H1 (cell line): ENCODE measurements at regions of chr19 and their contacts with region 1.

Region 1: DNA sequence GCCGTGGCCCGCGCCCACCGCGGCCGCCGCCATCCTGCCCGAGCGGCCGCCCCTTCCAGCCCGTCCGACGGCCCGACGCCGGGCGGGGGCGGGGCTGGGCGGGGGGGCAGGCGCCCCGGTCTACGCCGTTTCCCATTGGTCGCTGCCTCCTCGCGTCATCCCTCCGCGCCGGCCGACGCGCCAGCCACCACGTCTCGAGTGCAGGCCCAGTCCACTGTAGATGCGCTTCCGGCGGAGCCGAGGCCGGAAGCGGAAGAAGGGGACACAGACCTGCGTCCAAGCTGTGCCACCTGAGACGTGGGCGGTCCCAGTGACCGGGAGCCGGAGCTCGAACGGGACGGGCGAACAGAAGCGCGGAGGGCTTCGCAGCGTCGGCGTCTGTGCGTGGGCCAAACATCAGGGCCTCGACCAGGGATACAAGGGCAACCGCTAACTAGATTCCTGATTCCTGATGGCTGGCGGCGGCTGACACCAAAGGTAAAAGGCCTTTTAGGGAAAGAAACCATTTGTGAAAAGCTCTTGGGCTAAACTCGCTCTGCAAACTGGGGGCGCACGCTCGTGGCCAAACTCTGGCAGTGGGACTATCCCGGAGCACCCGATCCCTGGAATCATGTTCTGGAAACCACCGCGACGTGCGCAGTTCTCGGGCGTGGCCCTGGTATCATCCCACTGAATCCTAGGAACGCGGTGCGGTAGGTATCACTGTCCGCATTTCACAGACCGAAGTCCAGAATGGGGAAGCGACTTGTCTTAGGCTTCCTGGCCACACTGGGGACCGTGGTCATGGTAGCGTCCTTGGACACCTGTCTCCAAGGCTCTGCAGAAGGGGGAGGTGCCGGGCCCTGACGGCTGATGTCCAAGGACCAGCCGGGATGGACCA is at the start of gene SLC35E1:
- DNase-seq: peak; percentile 90 to 93
- H3K4me3 ChIP-seq: peak within 1 kb of the TSS; percentile 82 to 98 (median 88)
- H3K27ac ChIP-seq: peak within 1 kb of the TSS; percentile 43; the same call in 1 of the 2 replicates
- H3K4me1 ChIP-seq: peaks cover 0 to 6% (median 3%) of the 10 kb centered on the region in 4 experiments; a peak in 5 of 7 replicates
- H3K27me3 ChIP-seq: no peaks in the 10 kb centered on the region
- CTCF ChIP-seq: no peak
- EP300 ChIP-seq: no peak
- POLR2A ChIP-seq: peak in 1 of 2 experiments; percentile 80; a peak in 2 of 3 replicates
- RAD21 ChIP-seq: no peak; a peak in 1 of 4 replicates
- total RNA-seq, gene SLC35E1: 26.0 and 28.5 TPM in 2 replicates

Region 2: GRCh38 chr19:16584248-16585141 is 11.9 kb after region 1 on chr19:
- CTCF ChIA-PET with region 1: interaction called, 8 read pairs
- POLR2A ChIA-PET with region 1: interaction called, 58 read pairs
- DNase-seq: peak; percentile 27 to 73
- H3K4me3 ChIP-seq: peak overlapping the region in 2 of 4 experiments; percentile 17 to 45; a peak in 4 of 8 replicates
- H3K27ac ChIP-seq: no peak overlapping the region
- H3K4me1 ChIP-seq: peaks cover 4 to 39% (median 25%) of the 10 kb centered on the region in 4 experiments
- H3K27me3 ChIP-seq: no peaks in the 10 kb centered on the region
- CTCF ChIP-seq: no peak
- EP300 ChIP-seq: no peak
- POLR2A ChIP-seq: no peak
- RAD21 ChIP-seq: no peak

Region 3: GRCh38 chr19:16594131-16594586 is 21.6 kb after region 1 on chr19:
- CTCF ChIA-PET with region 1: interaction called, 3 read pairs
- POLR2A ChIA-PET with region 1: interaction called, 11 read pairs
- DNase-seq: no peak
- H3K4me3 ChIP-seq: no peak overlapping the region
- H3K27ac ChIP-seq: no peak overlapping the region
- H3K4me1 ChIP-seq: peaks cover 6 to 15% (median 9%) of the 10 kb centered on the region in 4 experiments; a peak in 6 of 7 replicates
- H3K27me3 ChIP-seq: no peaks in the 10 kb centered on the region
- CTCF ChIP-seq: no peak
- EP300 ChIP-seq: no peak
- POLR2A ChIP-seq: no peak
- RAD21 ChIP-seq: no peak